ENCODE measurements at regions of chr10 and their contacts with region 1.

Region 1: GRCh38 chr10:101429423-101429822 is 75.5 kb downstream of the BTRC start:
- DNase-seq: no peak
- H3K4me3 Mint-ChIP-seq: no peak overlapping the region
- H3K27ac Mint-ChIP-seq: no peak overlapping the region
- H3K4me1 Mint-ChIP-seq: no peaks in the 10 kb centered on the region
- H3K27me3 Mint-ChIP-seq: no peaks in the 10 kb centered on the region
- CTCF ChIP-seq: no peak

Region 2: GRCh38 chr10:100793055-100793454 is 636.4 kb before region 1 on chr10:
- CTCF ChIA-PET with region 1: interaction called, 14 read pairs
- intact Hi-C with region 1: no loop called
- DNase-seq: no peak
- H3K4me3 Mint-ChIP-seq: no peak overlapping the region
- H3K27ac Mint-ChIP-seq: no peak overlapping the region
- H3K4me1 Mint-ChIP-seq: no peaks in the 10 kb centered on the region
- H3K27me3 Mint-ChIP-seq: peaks cover 93% of the 10 kb centered on the region
- CTCF ChIP-seq: no peak

Measured in Calu3 (cell line).